Calu3 (cell line): ENCODE measurements at regions of chr5 and their contacts with region 1.

Region 1: GRCh38 chr5:35963381-35963843 is 25.0 kb upstream of the CAPSL start:
- DNase-seq: peak; percentile 25
- H3K4me3 Mint-ChIP-seq: no peak overlapping the region
- H3K27ac Mint-ChIP-seq: no peak overlapping the region
- H3K4me1 Mint-ChIP-seq: no peaks in the 10 kb centered on the region
- H3K27me3 Mint-ChIP-seq: no peaks in the 10 kb centered on the region
- CTCF ChIP-seq: peak; percentile 20

Region 2: GRCh38 chr5:36040651-36041537 is 77.5 kb after region 1 on chr5:
- CTCF ChIA-PET with region 1: no interaction called
- intact Hi-C with region 1: loop called (anchors 1 kb)
- DNase-seq: no peak
- H3K4me3 Mint-ChIP-seq: no peak overlapping the region
- H3K27ac Mint-ChIP-seq: no peak overlapping the region
- H3K4me1 Mint-ChIP-seq: no peaks in the 10 kb centered on the region
- H3K27me3 Mint-ChIP-seq: no peaks in the 10 kb centered on the region
- CTCF ChIP-seq: no peak